ENCODE measurements at regions of chr17 and their contacts with region 1.

Region 1: GRCh38 chr17:76467366-76467765 is at the start of gene AANAT:
- DNase-seq: no peak
- ATAC-seq: no peak
- H3K4me3 Mint-ChIP-seq: no peak within 1 kb of the TSS
- H3K27ac Mint-ChIP-seq: peak within 1 kb of the TSS in 3 of 10 donors; percentile 1 to 53 (median 48)
- H3K4me1 Mint-ChIP-seq: peaks cover 4 to 9% (median 6%) of the 10 kb centered on the region in 4 donors
- H3K27me3 Mint-ChIP-seq: peaks cover 0 to 1% (median 0%) of the 10 kb centered on the region in 5 donors
- polyA plus RNA-seq, gene AANAT: not detected

Region 2: GRCh38 chr17:76506408-76507349 is 39.3 kb after region 1 on chr17:
- POLR2A ChIA-PET with region 1: interaction called, 22 read pairs
- DNase-seq: peak; percentile 80 to 98 (median 88)
- ATAC-seq: peak; percentile 83 to 85
- H3K4me3 Mint-ChIP-seq: no peak overlapping the region
- H3K27ac Mint-ChIP-seq: peak overlapping the region in 9 of 10 donors; percentile 48 to 83 (median 75)
- H3K4me1 Mint-ChIP-seq: peaks cover 7 to 43% (median 23%) of the 10 kb centered on the region in 4 donors
- H3K27me3 Mint-ChIP-seq: no peaks in the 10 kb centered on the region

Measured in naive thymus-derived CD8-positive, alpha-beta T cell (primary cell).